Heart right ventricle (tissue), 16 donors: ENCODE measurements at regions of chr13 and their contacts with region 1.

Region 1: DNA sequence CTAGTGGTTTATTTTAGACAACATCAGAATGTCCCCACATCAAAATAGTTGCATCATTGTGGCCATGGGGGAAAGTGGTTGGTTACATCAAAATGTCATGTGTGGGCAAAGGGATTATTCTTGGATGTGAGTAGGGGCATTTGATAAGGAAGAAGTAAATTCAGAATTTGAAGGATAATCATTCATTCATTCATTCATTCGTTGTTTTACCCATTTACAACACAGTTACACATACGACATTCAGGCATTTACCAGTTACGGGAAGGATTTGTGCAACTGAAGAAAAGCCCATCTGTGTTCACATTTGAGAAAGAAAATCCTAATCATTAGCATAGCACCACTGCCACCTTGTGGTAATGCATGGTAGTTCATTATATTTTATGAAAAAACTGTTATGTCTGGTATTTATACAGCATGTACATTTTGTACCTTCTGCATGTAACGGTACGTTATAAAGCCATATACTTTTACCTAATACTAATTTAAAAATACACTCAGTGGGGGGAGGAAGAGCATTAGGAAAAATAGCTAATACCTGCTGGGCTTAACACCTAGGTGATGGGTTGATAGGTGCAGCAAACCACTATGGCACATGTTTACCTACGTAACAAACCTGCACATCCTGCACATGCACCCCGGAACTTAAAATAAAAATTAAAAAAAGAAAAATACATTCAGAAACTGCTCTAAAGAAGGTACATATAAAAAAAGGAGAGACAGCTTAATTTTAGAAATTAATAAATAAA is 62.1 kb downstream of the DGKH start:
- DNase-seq: peak in 1 of 2 donors; percentile 34
- ATAC-seq: peak in 6 of 8 donors; percentile 28 to 66 (median 44)
- H3K4me3 ChIP-seq: no peak overlapping the region
- H3K27ac ChIP-seq: no peak overlapping the region
- H3K4me1 ChIP-seq: peaks cover 0 to 41% (median 21%) of the 10 kb centered on the region in 9 donors
- H3K27me3 ChIP-seq: no peaks in the 10 kb centered on the region
- CTCF ChIP-seq: peak; percentile 78 to 88 (median 83)

Region 2: GRCh38 chr13:41352935-41353840 is 757.4 kb before region 1 on chr13:
- intact Hi-C with region 1: loop called in 2 of 10 experiments (anchors 5 to 10 kb)
- DNase-seq: peak in 1 of 2 donors; percentile 13
- ATAC-seq: peak in 6 of 8 donors; percentile 36 to 59 (median 54)
- H3K4me3 ChIP-seq: no peak overlapping the region
- H3K27ac ChIP-seq: peak overlapping the region in 1 of 10 donors; percentile 5
- H3K4me1 ChIP-seq: peaks cover 0 to 40% (median 0%) of the 10 kb centered on the region in 9 donors
- H3K27me3 ChIP-seq: no peaks in the 10 kb centered on the region
- CTCF ChIP-seq: peak; percentile 78 to 90 (median 83)

Region 3: DNA sequence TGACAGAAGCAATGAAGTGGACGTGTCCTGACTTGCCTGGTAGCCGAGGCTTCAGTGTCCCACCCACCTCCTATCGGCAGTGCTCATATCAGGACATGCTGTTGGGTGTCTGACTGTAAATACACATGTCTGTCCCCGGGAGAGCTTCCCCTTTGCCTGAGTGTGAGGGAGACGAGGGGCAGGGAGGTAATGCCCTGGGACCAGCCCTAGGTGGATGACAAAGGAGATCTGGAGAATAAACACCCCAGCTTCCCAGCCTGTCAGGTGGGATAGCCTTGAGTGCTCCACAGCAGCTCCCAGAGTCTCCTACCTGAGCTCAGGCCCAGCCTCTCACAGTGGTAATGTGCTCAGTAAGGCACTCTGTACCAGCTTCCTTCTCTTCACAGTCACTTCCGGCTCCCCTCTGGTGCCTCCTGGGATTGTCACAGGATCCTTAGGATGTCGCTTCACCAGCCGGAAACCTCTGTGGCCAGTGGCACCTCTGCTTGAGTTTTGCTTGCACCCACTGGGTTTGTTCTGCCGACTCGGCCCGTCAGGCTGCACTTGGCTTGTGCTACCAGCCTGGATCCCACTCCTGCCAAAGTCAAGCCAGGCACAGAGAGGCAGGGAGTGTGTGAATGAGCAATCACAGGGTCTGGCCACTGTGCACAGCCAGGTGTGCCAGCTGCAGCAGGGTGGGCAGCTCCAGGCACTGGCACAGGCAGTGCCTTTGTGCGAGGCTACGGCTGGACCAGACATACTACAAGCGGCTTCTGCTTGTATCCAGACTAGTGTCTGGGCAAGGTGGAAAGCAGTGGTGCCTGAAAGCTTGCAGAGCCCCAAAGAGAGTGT is 707.7 kb before region 1 on chr13:
- intact Hi-C with region 1: loop called in 1 of 10 experiments (anchors 10 kb)
- DNase-seq: no peak
- ATAC-seq: peak in 3 of 8 donors; percentile 22 to 31 (median 25)
- H3K4me3 ChIP-seq: no peak overlapping the region
- H3K27ac ChIP-seq: no peak overlapping the region
- H3K4me1 ChIP-seq: no peaks in the 10 kb centered on the region
- H3K27me3 ChIP-seq: no peaks in the 10 kb centered on the region
- CTCF ChIP-seq: no peak

Region 4: DNA sequence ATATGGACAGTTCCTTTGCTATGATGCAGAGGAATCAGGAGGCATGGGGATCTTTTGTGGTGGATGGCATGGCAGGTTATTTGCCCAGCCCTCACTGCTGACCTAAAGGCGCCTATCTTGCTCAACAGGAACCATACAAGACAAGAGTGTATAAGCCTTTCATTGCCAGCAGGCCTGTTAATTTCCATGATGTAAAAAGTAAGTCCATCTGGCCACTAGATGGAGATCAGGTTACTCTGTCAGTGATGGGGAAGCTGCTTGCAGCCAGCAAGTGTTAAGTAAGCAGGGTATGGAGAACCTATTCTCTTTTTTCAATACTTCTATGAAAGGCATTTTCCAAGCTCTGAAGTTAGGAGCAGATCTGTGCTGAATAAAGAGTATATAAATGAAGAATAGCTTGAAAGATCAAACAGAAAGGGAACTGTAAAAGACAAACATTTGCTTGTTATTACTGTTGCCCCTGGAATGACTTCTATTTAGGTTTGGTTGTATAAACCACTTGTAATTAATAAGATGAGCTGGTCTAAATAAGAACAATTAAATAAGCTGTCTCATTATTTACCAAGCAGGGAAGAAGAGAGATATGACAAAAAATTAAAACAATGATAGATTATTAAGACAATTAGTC is 442.3 kb before region 1 on chr13:
- intact Hi-C with region 1: loop called in 9 of 10 experiments (anchors 1 to 10 kb)
- DNase-seq: peak in 1 of 2 donors; percentile 74
- ATAC-seq: peak; percentile 91 to 98 (median 96)
- H3K4me3 ChIP-seq: no peak overlapping the region
- H3K27ac ChIP-seq: no peak overlapping the region
- H3K4me1 ChIP-seq: peaks cover 0 to 12% (median 4%) of the 10 kb centered on the region in 9 donors
- H3K27me3 ChIP-seq: no peaks in the 10 kb centered on the region
- CTCF ChIP-seq: peak; percentile 69 to 93 (median 83)

Region 5: DNA sequence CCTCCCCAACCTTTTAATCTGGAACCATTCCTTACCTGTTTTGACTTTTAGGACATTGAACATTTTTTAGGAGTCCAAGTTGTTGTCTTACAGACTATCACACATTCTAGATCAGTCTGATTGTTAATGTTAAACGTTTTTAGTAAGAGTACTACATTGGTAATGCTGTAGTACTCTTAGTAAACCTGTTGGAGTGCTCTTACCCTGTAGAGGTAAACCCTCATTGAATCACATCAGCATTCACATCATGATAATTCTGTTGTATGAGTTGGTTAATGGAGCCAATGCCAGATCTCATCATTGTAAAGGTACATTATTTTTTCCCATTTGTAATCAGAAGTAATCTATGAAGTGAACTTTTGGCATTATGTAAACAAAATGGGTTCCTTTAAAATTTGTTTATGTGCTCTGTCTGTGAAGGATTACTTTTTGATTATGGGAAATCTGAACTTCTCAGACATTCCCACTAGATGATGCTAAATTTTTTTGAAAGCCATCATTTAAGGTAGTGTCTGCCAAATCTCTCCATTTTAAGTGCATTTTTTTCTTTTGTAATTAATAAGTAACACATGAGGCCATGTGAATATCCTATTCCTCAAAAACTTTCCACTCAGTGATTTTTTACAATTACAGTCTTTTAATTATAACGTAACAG is 204.9 kb before region 1 on chr13:
- intact Hi-C with region 1: loop called in 6 of 10 experiments (anchors 5 to 10 kb)
- DNase-seq: no peak
- ATAC-seq: peak in 4 of 8 donors; percentile 35 to 52 (median 46)
- H3K4me3 ChIP-seq: no peak overlapping the region
- H3K27ac ChIP-seq: no peak overlapping the region
- H3K4me1 ChIP-seq: no peaks in the 10 kb centered on the region
- H3K27me3 ChIP-seq: no peaks in the 10 kb centered on the region
- CTCF ChIP-seq: peak; percentile 17 to 72 (median 57)

Region 6: GRCh38 chr13:42048682-42049453 is 61.7 kb before region 1 on chr13:
- intact Hi-C with region 1: loop called in 5 of 10 experiments (anchors 5 to 10 kb)
- DNase-seq: peak; percentile 87 to 88
- ATAC-seq: peak; percentile 83 to 91 (median 87)
- H3K4me3 ChIP-seq: peak overlapping the region; percentile 76 to 93 (median 86)
- H3K27ac ChIP-seq: peak overlapping the region; percentile 80 to 96 (median 92)
- H3K4me1 ChIP-seq: peaks cover 0 to 23% (median 15%) of the 10 kb centered on the region in 9 donors
- H3K27me3 ChIP-seq: peaks cover 0 to 12% (median 0%) of the 10 kb centered on the region in 7 donors
- CTCF ChIP-seq: peak in 7 of 9 donors; percentile 9 to 47 (median 29)